Activated CD8-positive, alpha-beta memory T cell treated with anti-CD3 and anti-CD28 coated beads, Interleukin-2, amount 10 ng/mL, durations not matched to agents 7 days and 5 days (primary cell): ENCODE measurements at regions of chr6 and their contacts with region 1.

Region 1: GRCh38 chr6:106360410-106360988 is at the start of gene CRYBG1:
- DNase-seq: peak; percentile 70
- ATAC-seq: peak; percentile 94
- H3K4me3 Mint-ChIP-seq: peak within 1 kb of the TSS; percentile 65
- H3K27ac Mint-ChIP-seq: no peak within 1 kb of the TSS
- H3K4me1 Mint-ChIP-seq: peaks cover 10% of the 10 kb centered on the region
- H3K27me3 Mint-ChIP-seq: peaks cover 63% of the 10 kb centered on the region
- total RNA-seq, gene CRYBG1: 44.1 to 62.7 TPM

Region 2: DNA sequence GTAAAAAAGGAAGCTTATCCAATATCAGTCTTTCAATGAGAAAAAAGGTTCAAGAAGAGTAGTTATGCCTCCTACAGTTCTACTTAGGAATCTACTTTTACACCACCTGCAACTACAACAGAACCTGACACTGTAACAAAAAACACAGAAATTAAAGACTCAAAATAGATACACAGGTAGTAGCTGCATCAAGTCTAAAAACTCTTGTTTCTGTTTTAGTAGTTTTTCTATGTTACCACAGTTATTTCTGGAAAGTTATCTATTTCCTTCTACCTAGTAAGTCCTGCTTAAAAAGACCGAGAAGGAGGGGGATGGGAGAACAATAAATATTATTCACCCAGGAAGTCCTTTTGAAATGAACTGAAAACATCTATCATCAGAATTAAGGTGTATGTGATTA is 87.4 kb before region 1 on chr6:
- CTCF ChIA-PET with region 1: no interaction called
- DNase-seq: no peak
- ATAC-seq: peak; percentile 50
- H3K4me3 Mint-ChIP-seq: no peak overlapping the region
- H3K27ac Mint-ChIP-seq: peak overlapping the region; percentile 16
- H3K4me1 Mint-ChIP-seq: peaks cover 15% of the 10 kb centered on the region
- H3K27me3 Mint-ChIP-seq: no peaks in the 10 kb centered on the region

Region 3: GRCh38 chr6:106339334-106340029 is 21.0 kb before region 1 on chr6:
- CTCF ChIA-PET with region 1: interaction called, 18 read pairs
- DNase-seq: peak; percentile 66
- ATAC-seq: peak; percentile 89
- H3K4me3 Mint-ChIP-seq: no peak overlapping the region
- H3K27ac Mint-ChIP-seq: no peak overlapping the region
- H3K4me1 Mint-ChIP-seq: peaks cover 5% of the 10 kb centered on the region
- H3K27me3 Mint-ChIP-seq: peaks cover 28% of the 10 kb centered on the region

Region 4: DNA sequence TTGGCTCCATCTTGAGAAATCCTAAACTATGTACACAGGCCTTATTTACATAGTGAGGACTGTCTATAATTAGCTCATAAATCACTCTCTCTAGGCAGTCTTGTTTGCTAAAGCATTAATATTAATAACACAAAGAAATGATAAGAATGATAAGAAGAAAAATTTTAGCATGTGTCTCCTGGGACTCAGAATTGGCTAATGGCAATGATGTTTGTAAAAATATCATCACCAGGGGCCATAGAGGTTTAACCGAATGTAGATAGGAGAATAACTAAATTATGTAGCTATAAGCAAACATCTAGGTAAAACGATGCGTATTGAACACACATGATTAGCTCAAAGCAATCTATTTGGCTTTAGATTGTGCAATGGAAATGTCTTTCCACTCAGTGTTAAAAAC is 13.2 kb before region 1 on chr6:
- CTCF ChIA-PET with region 1: interaction called, 15 read pairs
- DNase-seq: no peak
- ATAC-seq: no peak
- H3K4me3 Mint-ChIP-seq: no peak overlapping the region
- H3K27ac Mint-ChIP-seq: no peak overlapping the region
- H3K4me1 Mint-ChIP-seq: peaks cover 4% of the 10 kb centered on the region
- H3K27me3 Mint-ChIP-seq: peaks cover 29% of the 10 kb centered on the region

Region 5: DNA sequence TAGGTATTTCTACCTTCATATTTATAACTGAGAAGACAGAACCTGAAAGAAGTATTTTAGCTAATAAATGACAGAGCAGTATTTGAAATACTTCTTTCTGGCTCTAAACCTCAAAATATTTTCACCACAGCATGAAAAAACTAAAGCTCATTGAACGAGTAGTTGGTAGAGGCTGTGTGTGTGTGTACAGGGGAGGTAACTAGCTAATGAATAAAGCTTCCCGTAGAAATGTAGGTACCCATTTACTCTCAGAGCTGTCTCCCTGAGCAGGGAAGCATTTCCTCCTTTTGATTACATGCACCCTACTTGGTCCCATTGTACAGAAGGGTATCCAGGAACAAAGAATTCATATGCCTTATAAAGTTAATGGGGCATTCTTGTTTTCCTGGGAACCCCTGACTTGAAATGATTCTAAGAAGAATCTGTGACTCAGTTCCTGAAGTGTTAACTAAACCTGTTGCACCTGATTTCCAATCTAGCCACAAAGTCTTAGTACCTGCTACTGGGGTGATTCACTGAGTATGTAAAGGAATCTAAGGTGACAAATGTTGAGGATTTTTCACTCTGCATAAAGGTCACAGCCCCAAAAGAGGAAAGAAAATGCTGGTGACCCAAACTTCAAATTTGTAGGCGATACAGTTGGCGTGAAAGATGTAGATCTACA is 12.5 kb after region 1 on chr6:
- CTCF ChIA-PET with region 1: interaction called, 41 read pairs
- DNase-seq: no peak
- ATAC-seq: no peak
- H3K4me3 Mint-ChIP-seq: no peak overlapping the region
- H3K27ac Mint-ChIP-seq: peak overlapping the region; percentile 74
- H3K4me1 Mint-ChIP-seq: peaks cover 21% of the 10 kb centered on the region
- H3K27me3 Mint-ChIP-seq: peaks cover 14% of the 10 kb centered on the region